ENCODE measurements at regions of chr15 and their contacts with region 1.

Region 1: DNA sequence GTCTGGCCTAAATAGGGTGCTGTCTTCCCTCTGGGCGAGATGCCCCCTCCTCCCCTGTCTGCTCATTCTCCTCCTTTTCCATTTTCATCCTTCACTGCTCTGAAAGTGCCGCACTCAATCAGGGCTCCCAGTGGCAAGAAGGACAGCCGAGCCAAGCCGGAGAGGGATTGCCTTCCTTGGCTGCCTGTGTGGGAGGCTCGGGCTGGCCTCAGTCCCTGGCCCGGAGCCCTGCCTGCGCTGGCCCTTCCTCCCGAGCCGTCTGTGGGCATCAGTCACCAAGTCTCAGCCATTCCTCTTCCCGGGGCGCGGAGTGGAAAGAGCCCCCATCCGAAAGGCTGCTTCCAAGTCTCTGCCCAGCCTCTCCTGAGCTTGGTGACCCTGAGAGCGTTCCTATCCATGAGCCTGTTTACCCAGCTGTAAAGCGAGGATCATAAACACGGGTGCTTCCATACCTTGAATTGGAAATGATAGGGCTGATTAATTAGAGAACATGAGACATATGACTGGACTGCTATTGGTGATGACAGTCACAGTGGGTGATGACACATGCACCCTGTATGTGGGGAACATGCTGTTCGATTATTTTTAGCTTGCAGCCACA is 59.1 kb upstream of the TLE3 start:
- DNase-seq: peak in 4 of 5 donors; percentile 40 to 60 (median 53)
- ATAC-seq: peak in 3 of 4 donors; percentile 54 to 72 (median 69)
- H3K4me3 ChIP-seq: no peak overlapping the region
- H3K27ac ChIP-seq: peak overlapping the region in 2 of 12 donors; percentile 37 to 75
- H3K4me1 ChIP-seq: peaks cover 0 to 77% (median 57%) of the 10 kb centered on the region in 12 donors
- H3K27me3 ChIP-seq: no peaks in the 10 kb centered on the region
- CTCF ChIP-seq: no peak
- POLR2A ChIP-seq: no peak

Region 2: DNA sequence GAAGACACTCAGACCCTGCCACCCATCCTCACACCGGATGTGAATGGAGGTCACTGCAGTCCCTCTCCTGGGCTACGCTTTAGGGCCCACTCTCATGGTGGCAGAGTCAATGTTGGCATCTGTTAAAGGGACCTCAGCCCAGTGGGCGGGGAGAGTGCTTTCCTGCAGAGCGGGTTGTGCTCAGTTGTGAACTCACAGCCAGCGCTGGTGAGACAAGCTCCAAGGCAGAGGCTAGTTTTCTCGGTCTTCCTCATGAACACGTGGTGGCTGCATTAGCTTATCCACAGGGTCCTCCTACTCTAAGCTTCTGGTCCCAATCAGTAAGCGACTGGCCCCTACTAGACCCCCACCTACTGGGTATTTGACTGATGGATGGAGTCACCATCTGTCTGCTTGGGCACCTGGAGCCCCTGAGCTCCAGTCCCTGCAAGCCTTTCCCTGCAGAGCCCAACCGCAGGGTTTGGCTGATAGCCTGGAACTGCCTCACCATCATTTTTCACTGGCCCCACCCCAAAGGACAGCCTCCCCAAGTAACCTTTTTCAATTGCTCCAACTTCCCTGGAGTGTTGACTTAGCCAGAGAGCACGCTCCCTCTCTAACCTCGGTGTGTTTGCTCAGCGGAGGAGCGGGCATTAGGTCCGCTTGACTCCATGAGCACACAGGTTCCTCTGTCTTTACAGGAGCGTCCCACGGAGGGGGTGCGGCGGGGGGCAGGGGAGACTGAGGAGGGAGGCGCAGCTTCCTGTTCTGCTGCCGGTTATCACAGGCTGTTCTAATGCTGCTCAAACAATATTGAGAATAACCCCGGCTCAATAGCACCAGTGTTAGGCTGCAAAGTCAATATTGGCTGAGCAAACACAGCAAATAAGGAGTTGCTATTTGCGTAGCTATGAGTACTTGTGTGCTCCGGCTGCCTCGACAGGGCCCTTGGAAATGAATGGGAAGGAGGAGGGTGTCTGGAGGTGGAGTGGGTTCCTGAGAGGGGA is 562.5 kb before region 1 on chr15:
- intact Hi-C with region 1: loop called in 2 of 10 experiments (anchors 5 to 10 kb)
- DNase-seq: peak; percentile 42 to 74 (median 53)
- ATAC-seq: peak; percentile 33 to 60 (median 52)
- H3K4me3 ChIP-seq: peak overlapping the region in 1 of 12 donors; percentile 1
- H3K27ac ChIP-seq: peak overlapping the region; percentile 71 to 98 (median 87)
- H3K4me1 ChIP-seq: peaks cover 0 to 30% (median 25%) of the 10 kb centered on the region in 12 donors
- H3K27me3 ChIP-seq: peaks cover 0 to 5% (median 0%) of the 10 kb centered on the region in 9 donors
- CTCF ChIP-seq: no peak
- POLR2A ChIP-seq: no peak

Region 3: GRCh38 chr15:70647396-70647795 is 490.6 kb after region 1 on chr15:
- intact Hi-C with region 1: loop called in 1 of 10 experiments (anchors 5 kb)
- DNase-seq: no peak
- ATAC-seq: no peak
- H3K4me3 ChIP-seq: no peak overlapping the region
- H3K27ac ChIP-seq: no peak overlapping the region
- H3K4me1 ChIP-seq: peaks cover 0 to 6% (median 0%) of the 10 kb centered on the region in 12 donors
- H3K27me3 ChIP-seq: no peaks in the 10 kb centered on the region
- CTCF ChIP-seq: no peak
- POLR2A ChIP-seq: no peak

Measured in heart left ventricle (tissue), 16 donors.